Activated CD4-positive, alpha-beta T cell treated with anti-CD3 and anti-CD28 coated beads for 36 hours (primary cell): ENCODE measurements at regions of chr4 and their contacts with region 1.

Region 1: GRCh38 chr4:119628308-119629141 is at the start of gene PDE5A:
- DNase-seq: peak; percentile 89
- ATAC-seq: peak; percentile 87
- H3K4me3 Mint-ChIP-seq: peak within 1 kb of the TSS; percentile 74
- H3K27ac Mint-ChIP-seq: no peak within 1 kb of the TSS
- H3K4me1 Mint-ChIP-seq: peaks cover 15% of the 10 kb centered on the region
- H3K27me3 Mint-ChIP-seq: peaks cover 19% of the 10 kb centered on the region
- total RNA-seq, gene PDE5A: 0.25 to 0.47 TPM

Region 2: DNA sequence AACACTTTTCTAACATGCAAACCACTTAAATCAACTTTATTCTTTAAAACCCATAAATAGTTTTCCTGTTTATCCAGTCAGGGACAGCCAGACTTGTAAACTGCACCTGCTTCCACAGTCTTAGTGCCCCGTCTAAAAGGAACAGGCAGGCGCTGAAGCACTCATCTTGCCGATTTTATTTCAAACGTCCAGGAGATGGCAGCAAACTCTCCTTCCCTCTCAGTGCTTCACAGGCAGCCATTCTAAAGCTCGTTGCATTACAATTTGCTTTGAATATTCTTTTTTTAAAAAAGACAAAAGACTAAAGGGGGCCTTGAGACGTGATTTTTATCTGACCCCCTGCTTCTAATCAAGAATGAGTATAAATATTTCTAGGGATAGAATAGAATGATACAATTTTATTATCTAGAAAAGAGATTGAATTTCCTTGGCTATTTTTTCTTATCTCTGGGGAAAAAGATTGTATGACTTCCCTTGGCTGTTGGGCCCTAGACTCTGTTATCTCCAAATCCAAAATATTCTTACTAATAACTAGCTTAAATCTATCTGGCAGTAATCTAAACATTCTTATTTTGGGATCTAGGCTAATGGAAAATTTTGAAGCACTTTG is 586.5 kb before region 1 on chr4:
- CTCF ChIA-PET with region 1: no interaction called
- POLR2A ChIA-PET with region 1: no interaction called
- intact Hi-C with region 1: loop called in 1 of 2 experiments (anchors 5 kb)
- DNase-seq: peak; percentile 71
- ATAC-seq: peak; percentile 85
- H3K4me3 Mint-ChIP-seq: no peak overlapping the region
- H3K27ac Mint-ChIP-seq: no peak overlapping the region
- H3K4me1 Mint-ChIP-seq: peaks cover 16% of the 10 kb centered on the region
- H3K27me3 Mint-ChIP-seq: no peaks in the 10 kb centered on the region

Region 3: GRCh38 chr4:119559044-119559647 is 69.4 kb before region 1 on chr4:
- CTCF ChIA-PET with region 1: interaction called, 9 read pairs
- POLR2A ChIA-PET with region 1: no interaction called
- intact Hi-C with region 1: loop called in 1 of 2 experiments (anchors 2 kb)
- DNase-seq: no peak
- ATAC-seq: no peak
- H3K4me3 Mint-ChIP-seq: no peak overlapping the region
- H3K27ac Mint-ChIP-seq: no peak overlapping the region
- H3K4me1 Mint-ChIP-seq: no peaks in the 10 kb centered on the region
- H3K27me3 Mint-ChIP-seq: no peaks in the 10 kb centered on the region

Region 4: GRCh38 chr4:119785963-119786362 is 157.4 kb after region 1 on chr4:
- CTCF ChIA-PET with region 1: no interaction called
- POLR2A ChIA-PET with region 1: no interaction called
- intact Hi-C with region 1: loop called in 1 of 2 experiments (anchors 2 kb)
- DNase-seq: peak; percentile 7
- ATAC-seq: no peak
- H3K4me3 Mint-ChIP-seq: no peak overlapping the region
- H3K27ac Mint-ChIP-seq: no peak overlapping the region
- H3K4me1 Mint-ChIP-seq: no peaks in the 10 kb centered on the region
- H3K27me3 Mint-ChIP-seq: peaks cover 4% of the 10 kb centered on the region

Region 5: GRCh38 chr4:120056246-120056645 is 427.7 kb after region 1 on chr4:
- CTCF ChIA-PET with region 1: interaction called, 14 read pairs
- POLR2A ChIA-PET with region 1: interaction called, 3 read pairs
- intact Hi-C with region 1: no loop called
- DNase-seq: no peak
- ATAC-seq: no peak
- H3K4me3 Mint-ChIP-seq: no peak overlapping the region
- H3K27ac Mint-ChIP-seq: no peak overlapping the region
- H3K4me1 Mint-ChIP-seq: no peaks in the 10 kb centered on the region
- H3K27me3 Mint-ChIP-seq: no peaks in the 10 kb centered on the region